PC-3 (cell line): ENCODE measurements at regions of chr14 and their contacts with region 1.

Region 1: DNA sequence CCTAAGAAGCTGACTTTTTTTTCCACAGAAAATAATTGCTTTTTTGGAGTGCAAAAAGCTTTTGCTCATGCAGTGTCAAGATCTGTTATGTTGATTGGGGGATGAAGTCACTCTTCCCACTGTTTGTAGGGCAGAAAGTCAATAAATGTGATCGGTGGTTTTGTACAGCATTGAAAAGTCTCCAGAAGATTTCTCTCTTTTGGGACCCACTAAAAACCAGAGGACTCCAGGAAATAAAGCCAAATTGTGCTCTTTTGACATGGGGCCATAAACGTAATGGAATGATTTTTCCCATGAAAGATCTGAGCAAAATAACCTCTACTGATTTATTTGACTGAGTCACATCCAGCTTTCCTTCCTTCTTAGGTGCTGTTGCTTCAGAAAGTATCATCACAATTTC is 122.5 kb downstream of the SNAPC1 start:
- DNase-seq: peak; percentile 80
- ATAC-seq: peak; percentile 16; the same call in 1 of the 2 replicates
- H3K4me3 ChIP-seq: peak overlapping the region; percentile 45; the same call in 1 of the 2 replicates
- H3K27ac ChIP-seq: peak overlapping the region; percentile 91
- H3K4me1 ChIP-seq: peaks cover 24% of the 10 kb centered on the region
- H3K27me3 ChIP-seq: no peaks in the 10 kb centered on the region
- CTCF ChIP-seq: no peak

Region 2: DNA sequence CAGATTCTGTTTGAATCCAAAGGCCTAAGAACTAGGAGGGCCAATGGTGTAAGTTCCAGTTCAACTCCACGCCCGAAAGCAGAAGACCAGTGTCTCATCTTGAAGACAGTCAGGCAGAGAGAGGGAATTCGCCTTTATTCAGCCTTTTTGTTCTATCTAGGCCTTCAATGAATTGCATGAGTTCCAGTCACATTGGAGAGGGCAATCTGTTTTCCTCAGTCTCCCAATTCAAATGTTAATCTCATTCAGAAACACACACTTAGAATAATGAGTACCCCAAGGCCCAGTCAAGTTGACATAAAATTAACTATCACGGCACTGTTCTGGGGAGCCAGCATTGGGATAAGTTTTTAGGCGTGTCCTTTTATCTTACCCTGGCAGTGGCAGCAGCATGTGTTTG is 1464.7 kb before region 1 on chr14:
- CTCF ChIA-PET with region 1: no interaction called
- POLR2A ChIA-PET with region 1: no interaction called
- intact Hi-C with region 1: no loop called
- DNase-seq: no peak
- ATAC-seq: no peak
- H3K4me3 ChIP-seq: no peak overlapping the region
- H3K27ac ChIP-seq: no peak overlapping the region
- H3K4me1 ChIP-seq: peaks cover 4% of the 10 kb centered on the region
- H3K27me3 ChIP-seq: no peaks in the 10 kb centered on the region
- CTCF ChIP-seq: no peak

Region 3: GRCh38 chr14:61866932-61867920 is 17.5 kb before region 1 on chr14:
- CTCF ChIA-PET with region 1: no interaction called
- POLR2A ChIA-PET with region 1: no interaction called
- intact Hi-C with region 1: loop called (anchors 2 kb)
- DNase-seq: peak; percentile 90
- ATAC-seq: peak; percentile 96
- H3K4me3 ChIP-seq: no peak overlapping the region
- H3K27ac ChIP-seq: peak overlapping the region; percentile 55
- H3K4me1 ChIP-seq: peaks cover 16% of the 10 kb centered on the region
- H3K27me3 ChIP-seq: no peaks in the 10 kb centered on the region
- CTCF ChIP-seq: no peak

Region 4: GRCh38 chr14:61934385-61934784 is 49.7 kb after region 1 on chr14:
- CTCF ChIA-PET with region 1: no interaction called
- POLR2A ChIA-PET with region 1: no interaction called
- intact Hi-C with region 1: loop called (anchors 1 kb)
- DNase-seq: peak; percentile 98
- ATAC-seq: peak; percentile 92
- H3K4me3 ChIP-seq: no peak overlapping the region
- H3K27ac ChIP-seq: peak overlapping the region; percentile 93
- H3K4me1 ChIP-seq: peaks cover 52% of the 10 kb centered on the region
- H3K27me3 ChIP-seq: no peaks in the 10 kb centered on the region
- CTCF ChIP-seq: no peak

Region 5: GRCh38 chr14:62126879-62127478 is 242.3 kb after region 1 on chr14:
- CTCF ChIA-PET with region 1: interaction called, 5 read pairs
- POLR2A ChIA-PET with region 1: interaction called, 4 read pairs
- intact Hi-C with region 1: loop called (anchors 1 kb)
- DNase-seq: peak; percentile 85
- ATAC-seq: peak; percentile 88
- H3K4me3 ChIP-seq: no peak overlapping the region
- H3K27ac ChIP-seq: peak overlapping the region; percentile 15; the same call in 1 of the 2 replicates
- H3K4me1 ChIP-seq: peaks cover 5% of the 10 kb centered on the region; the same call in 1 of the 2 replicates
- H3K27me3 ChIP-seq: no peaks in the 10 kb centered on the region
- CTCF ChIP-seq: peak; percentile 94